Activated T-helper 2 cell treated with anti-CD3 and anti-CD28 coated beads, Interferon-gamma antibody, Interleukin-2, Interleukin-4, amounts not matched to agents 10 μg/mL and 5 μg/mL and 100 μg/mL, durations not matched to agents 14 hours and 24 hours and 36 hours (primary cell): ENCODE measurements at regions of chr6 and their contacts with region 1.

Region 1: DNA sequence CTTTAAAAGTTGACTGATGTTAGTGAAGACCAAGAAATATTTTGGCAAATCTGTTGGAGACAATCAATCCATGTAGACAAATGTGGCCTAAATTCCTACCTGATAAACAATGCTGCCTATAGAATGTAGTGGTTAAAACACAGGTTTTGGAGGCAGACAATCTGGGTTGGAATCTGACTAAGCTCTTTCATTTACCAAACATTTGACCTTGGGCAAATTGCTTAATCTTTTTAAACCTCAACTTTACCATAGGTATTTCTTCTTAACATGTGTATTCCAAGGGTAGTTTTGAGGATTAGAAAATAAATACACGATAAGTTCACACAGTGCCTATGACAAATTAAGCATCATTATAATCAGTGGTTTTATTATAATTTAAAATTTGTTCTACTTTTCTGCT is 11.5 kb downstream of the RHAG start:
- DNase-seq: no peak
- H3K4me3 Mint-ChIP-seq: no peak overlapping the region
- H3K27ac Mint-ChIP-seq: no peak overlapping the region
- H3K4me1 Mint-ChIP-seq: no peaks in the 10 kb centered on the region
- H3K27me3 Mint-ChIP-seq: no peaks in the 10 kb centered on the region

Region 2: DNA sequence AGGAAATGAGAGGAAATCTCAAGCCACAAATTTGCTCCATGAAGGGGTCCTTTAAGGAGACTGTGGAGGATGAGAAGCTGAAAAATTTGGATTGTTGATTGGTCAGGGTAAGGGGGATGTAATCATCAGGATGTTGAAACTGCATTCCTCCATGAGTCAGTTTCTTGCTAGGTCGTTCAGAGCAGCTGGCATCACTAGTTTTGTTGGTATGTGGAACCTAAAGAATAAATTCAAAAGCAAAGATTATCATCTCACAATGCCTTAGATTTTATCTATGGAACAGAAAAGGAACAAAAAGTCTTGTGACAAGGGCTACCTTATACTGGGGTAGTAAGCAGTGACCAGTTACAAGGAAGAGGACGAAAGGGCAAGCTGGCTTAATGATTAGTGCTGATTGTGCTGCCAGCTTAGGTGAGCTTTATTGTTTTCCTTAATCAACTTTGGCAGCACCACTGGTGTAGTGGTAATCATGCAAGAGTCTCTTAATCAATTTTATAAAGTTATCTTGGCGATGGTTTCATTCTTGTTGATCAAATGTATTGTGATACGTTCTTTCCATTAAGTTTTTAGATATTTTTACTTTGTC is 51.6 kb after region 1 on chr6:
- intact Hi-C with region 1: no loop called
- DNase-seq: no peak
- H3K4me3 Mint-ChIP-seq: no peak overlapping the region
- H3K27ac Mint-ChIP-seq: no peak overlapping the region
- H3K4me1 Mint-ChIP-seq: no peaks in the 10 kb centered on the region
- H3K27me3 Mint-ChIP-seq: no peaks in the 10 kb centered on the region

Region 3: DNA sequence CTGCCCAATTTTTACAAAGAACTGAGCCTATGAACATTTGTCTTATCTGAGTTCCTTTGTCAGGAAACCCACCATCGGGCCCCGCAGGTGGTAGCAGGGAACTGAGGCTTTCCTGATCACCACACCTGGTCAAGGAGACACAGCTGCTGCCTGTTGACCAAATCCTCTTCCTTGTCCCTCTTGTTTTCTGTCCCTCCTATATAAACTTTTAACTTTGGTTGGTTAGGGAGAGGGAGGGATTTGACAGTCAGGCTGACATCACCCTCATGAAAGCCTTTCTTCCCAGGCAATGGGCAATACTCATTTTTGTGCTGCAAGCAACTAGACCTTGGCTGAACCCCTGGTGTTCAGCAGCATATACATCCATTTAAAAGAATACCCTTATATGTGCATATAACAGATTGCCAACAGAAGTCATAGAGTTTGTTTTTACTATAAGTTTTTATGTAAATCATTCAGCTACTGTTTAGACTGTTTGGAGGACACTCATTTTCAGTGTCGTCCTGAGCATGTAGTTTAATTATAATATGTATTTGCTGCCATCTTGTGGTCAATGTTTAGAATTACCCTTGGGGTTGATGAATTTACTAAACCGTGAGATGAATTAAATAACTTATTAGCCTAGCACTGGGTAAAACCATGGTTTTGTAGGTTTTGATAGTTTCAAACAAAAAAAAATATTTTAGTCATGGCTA is 224.2 kb after region 1 on chr6:
- intact Hi-C with region 1: loop called (anchors 1 kb)
- DNase-seq: no peak
- H3K4me3 Mint-ChIP-seq: no peak overlapping the region
- H3K27ac Mint-ChIP-seq: no peak overlapping the region
- H3K4me1 Mint-ChIP-seq: no peaks in the 10 kb centered on the region
- H3K27me3 Mint-ChIP-seq: no peaks in the 10 kb centered on the region